ENCODE measurements at regions of chr10 and their contacts with region 1.

Region 1: GRCh38 chr10:30534465-30535144 is 94.9 kb downstream of the LYZL2 start:
- DNase-seq: peak; percentile 70
- H3K4me3 ChIP-seq: no peak overlapping the region
- H3K27ac ChIP-seq: no peak overlapping the region
- H3K4me1 ChIP-seq: no peaks in the 10 kb centered on the region
- H3K27me3 ChIP-seq: no peaks in the 10 kb centered on the region
- CTCF ChIP-seq: peak; percentile 67 to 88 (median 82)
- POLR2A ChIP-seq: no peak

Region 2: DNA sequence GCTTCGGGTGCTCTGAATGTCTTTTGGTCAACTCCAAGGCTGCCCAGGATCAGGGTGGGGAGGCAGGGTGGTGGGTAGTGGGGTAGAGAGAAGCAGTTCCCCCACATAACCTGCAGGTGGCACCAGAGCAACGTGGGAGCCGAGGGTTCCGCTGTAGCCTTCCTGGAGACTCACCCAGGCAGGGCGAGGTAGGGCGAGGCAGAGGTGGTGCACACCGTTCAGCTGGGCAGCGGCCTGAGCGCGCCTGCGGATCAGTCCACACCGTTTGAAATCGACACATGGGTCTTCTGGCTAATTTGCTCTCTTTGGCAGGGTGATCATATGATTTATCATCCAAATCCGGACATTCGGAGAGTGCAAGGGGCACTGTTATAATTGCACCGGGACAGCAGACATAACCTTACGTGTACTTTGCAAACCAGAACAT is 142.0 kb before region 1 on chr10:
- intact Hi-C with region 1: loop called (anchors 5 kb)
- DNase-seq: peak; percentile 55
- H3K4me3 ChIP-seq: no peak overlapping the region
- H3K27ac ChIP-seq: no peak overlapping the region
- H3K4me1 ChIP-seq: no peaks in the 10 kb centered on the region
- H3K27me3 ChIP-seq: no peaks in the 10 kb centered on the region
- CTCF ChIP-seq: peak; percentile 63 to 82 (median 80)
- POLR2A ChIP-seq: no peak

Region 3: DNA sequence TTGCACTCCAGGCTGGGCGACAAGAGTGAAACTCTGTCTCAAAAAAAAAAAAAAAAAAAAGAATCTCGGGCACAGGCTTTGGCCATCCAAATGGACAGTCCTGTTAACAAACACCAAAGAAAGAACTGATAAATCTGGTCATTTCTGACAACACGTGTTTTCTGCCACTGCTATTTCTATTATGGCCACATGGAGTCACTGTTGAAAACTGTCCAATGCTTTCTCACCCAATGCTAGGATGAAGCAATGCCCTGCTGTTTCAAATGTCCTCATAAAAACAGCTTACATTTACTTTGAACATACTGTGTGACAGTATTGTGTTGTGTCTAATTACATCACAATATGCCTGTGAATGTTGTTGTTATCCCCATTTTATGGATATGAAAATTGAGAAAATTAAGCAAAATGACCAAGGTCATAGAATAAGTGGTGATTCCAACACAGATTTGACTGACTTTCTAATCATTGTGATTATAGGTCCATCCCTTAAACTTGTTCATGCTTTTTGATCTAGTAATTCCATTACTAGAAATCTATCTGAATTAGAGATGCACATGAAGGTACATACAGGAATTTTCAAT is 120.5 kb before region 1 on chr10:
- intact Hi-C with region 1: loop called (anchors 2 kb)
- DNase-seq: peak; percentile 56
- H3K4me3 ChIP-seq: no peak overlapping the region
- H3K27ac ChIP-seq: no peak overlapping the region
- H3K4me1 ChIP-seq: no peaks in the 10 kb centered on the region
- H3K27me3 ChIP-seq: no peaks in the 10 kb centered on the region
- CTCF ChIP-seq: peak; percentile 46 to 88 (median 75)
- POLR2A ChIP-seq: no peak

Measured in prostate gland (tissue), 2 donors.